ENCODE measurements at regions of chr4 and their contacts with region 1.

Region 1: DNA sequence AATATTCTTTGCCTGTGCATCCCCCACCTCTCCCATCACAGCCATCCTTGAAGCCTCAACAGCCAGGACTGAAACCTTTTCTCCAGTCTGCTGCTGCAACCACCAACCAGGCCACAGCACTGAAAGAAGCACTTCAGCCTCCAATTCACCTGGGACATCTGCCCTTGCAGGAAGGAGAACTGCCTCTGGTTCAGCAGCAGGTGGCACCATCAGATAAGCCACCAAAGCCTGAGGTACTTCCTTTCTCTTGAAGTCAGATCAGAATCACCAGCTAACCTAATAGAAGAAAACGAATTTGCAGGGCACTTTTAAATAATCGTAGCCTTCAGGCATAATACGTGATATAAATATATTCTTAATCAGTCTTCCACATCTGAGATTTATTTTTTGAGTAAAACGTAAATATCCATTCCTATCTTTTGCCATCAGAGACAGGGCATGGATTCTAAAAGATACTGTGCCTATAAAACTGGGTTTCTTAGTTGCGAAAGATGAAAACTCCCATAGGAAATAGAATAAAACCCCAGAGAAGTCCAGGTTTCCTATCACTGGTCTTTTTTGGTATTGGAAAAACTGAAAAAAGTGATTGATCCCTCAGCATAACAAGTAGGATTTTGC is 9.5 kb downstream of the AMBN start:
- DNase-seq: peak; percentile 81
- ATAC-seq: peak; percentile 98
- H3K4me3 Mint-ChIP-seq: no peak overlapping the region
- H3K27ac Mint-ChIP-seq: no peak overlapping the region
- H3K4me1 Mint-ChIP-seq: no peaks in the 10 kb centered on the region
- H3K27me3 Mint-ChIP-seq: peaks cover 15% of the 10 kb centered on the region

Region 2: DNA sequence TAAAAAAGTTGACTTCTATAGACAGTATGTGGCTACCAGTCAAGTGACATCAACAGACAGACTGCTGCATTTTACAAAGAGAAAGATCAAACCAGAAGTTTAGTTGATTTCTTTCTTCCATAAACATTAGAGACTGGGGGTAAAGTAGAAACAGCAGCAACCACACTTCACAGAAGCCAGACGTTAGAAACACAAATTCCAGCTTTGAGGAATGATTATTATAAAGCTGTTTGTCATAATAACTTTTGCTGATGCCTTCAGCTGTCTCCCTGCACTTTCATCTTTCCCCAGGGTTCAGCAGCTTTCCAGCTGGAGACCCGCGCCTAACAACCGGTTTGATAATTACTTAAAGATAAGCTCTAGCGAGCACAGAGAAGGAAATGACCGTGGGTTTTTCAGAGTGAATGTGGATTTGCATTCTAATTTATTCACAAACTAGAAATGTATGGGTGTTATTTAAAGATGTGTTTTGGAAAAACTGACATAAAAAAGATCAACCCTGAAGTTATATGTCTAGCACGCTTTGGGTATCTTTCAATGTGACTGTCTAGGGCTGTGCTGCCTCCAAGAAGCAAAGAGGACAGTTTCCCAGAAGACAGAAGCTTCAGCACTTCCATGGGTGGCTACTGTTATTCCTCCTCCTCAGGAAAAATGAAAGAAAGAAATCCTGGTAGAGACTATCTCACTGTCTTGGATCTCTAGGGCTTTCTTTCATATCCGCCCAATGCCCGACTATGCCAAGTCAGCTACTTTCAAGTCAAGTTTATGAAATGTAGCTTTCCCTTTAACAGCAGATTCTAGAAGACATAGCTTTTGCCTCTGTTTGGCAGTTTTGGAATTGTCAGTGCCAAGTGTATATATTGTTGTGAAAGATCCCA is 12.0 kb after region 1 on chr4:
- CTCF ChIA-PET with region 1: interaction called, 39 read pairs
- POLR2A ChIA-PET with region 1: no interaction called
- DNase-seq: no peak
- ATAC-seq: no peak
- H3K4me3 Mint-ChIP-seq: no peak overlapping the region
- H3K27ac Mint-ChIP-seq: no peak overlapping the region
- H3K4me1 Mint-ChIP-seq: peaks cover 2% of the 10 kb centered on the region
- H3K27me3 Mint-ChIP-seq: peaks cover 32% of the 10 kb centered on the region